Activated CD4-positive, alpha-beta T cell treated with anti-CD3 and anti-CD28 coated beads for 36 hours (primary cell): ENCODE measurements at regions of chr9 and their contacts with region 1.

Region 1: DNA sequence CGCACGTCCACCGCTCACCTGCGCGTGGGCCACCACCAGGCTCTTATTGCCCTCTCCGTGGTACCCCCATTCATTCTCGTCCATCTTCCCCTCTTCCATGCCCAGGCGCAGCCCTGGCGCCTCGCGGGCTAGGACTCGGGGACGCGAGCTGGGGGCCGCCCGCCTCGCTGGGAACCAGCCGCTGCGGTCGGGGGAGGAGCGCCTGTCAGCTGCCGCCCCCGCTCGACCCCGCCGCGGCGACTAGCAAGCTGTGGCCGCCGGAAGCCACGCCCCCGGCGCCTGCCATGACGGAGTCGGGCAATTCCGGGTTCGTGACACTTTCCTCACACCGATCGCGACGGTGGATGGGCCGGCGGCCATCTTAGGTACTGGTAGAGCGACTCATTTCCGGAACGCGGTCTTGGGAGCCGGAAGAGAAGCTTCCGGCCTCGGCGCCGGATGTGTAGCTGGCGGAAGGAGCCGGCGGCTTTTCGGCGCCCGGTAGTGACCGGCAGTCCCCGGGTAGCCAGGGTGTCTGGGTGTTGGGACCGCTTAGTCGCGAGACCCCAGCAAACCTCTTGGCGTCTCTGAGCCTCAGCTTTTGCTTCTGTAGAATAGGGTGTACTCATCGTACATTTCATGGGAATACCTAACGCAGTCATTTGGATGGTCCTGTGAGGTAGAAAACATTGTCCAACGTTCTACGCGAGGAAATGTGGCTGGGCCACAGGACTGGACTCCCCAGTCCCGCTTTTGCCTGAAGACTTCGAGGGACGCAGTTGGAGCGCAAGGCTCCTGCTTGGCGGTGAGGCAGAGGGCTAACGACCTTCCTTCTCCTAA is at the start of gene IPPK:
- DNase-seq: peak; percentile 99
- ATAC-seq: peak; percentile 94
- H3K4me3 Mint-ChIP-seq: peak within 1 kb of the TSS; percentile 96
- H3K27ac Mint-ChIP-seq: peak within 1 kb of the TSS; percentile 93
- H3K4me1 Mint-ChIP-seq: peaks cover 33% of the 10 kb centered on the region
- H3K27me3 Mint-ChIP-seq: no peaks in the 10 kb centered on the region
- total RNA-seq, gene IPPK: 9.9 to 12.2 TPM

Region 2: DNA sequence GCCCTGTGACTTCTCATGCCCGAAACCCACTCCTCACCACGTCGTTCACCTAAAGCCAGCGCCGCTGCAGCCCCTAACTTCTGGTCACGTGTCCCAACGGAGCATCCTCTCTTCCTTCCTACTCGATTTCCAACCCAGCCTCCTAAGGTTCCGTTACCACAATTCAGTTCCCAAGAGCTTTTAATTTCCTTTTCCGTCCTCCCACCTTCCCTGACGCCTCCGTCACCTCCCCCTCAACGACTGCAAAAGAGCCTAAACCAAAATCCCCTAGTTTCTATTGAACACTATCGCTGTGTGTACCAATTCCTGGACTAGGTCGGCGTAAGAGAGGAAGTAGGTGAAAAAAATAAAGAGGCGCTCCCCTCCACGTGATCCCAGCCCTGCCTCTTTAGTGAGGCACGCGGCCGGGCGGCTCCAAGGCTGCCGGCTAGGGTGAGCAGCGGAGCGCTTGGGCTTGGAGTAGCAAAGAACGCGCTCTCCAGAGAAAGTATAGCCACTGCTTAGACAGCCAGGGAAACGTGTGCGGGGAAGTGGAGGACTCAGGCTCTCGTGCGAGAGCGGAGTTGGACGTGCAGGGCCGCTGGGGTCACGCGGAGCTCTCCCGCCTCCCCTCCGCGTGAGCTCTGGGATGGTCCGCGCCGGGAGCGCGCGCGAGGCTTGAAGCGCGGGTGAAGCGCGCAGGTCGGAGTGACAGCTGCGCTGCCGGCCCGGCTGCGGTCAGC is 344.7 kb before region 1 on chr9 and contains the starts of genes CENPP and NOL8:
- CTCF ChIA-PET with region 1: no interaction called
- POLR2A ChIA-PET with region 1: interaction called, 8 read pairs
- intact Hi-C with region 1: loop called in 1 of 2 experiments (anchors 1 kb)
- DNase-seq: peak; percentile 90
- ATAC-seq: peak; percentile 95
- H3K4me3 Mint-ChIP-seq: peak within 1 kb of the TSS; percentile 89
- H3K27ac Mint-ChIP-seq: peak within 1 kb of the TSS; percentile 97
- H3K4me1 Mint-ChIP-seq: peaks cover 37% of the 10 kb centered on the region
- H3K27me3 Mint-ChIP-seq: no peaks in the 10 kb centered on the region
- total RNA-seq, gene CENPP: 22.8 to 32.3 TPM
- total RNA-seq, gene NOL8: 57.7 to 80.2 TPM

Region 3: GRCh38 chr9:92444841-92445240 is 225.3 kb before region 1 on chr9:
- CTCF ChIA-PET with region 1: no interaction called
- POLR2A ChIA-PET with region 1: no interaction called
- intact Hi-C with region 1: no loop called
- DNase-seq: no peak
- ATAC-seq: no peak
- H3K4me3 Mint-ChIP-seq: no peak overlapping the region
- H3K27ac Mint-ChIP-seq: no peak overlapping the region
- H3K4me1 Mint-ChIP-seq: peaks cover 3% of the 10 kb centered on the region
- H3K27me3 Mint-ChIP-seq: no peaks in the 10 kb centered on the region

Region 4: GRCh38 chr9:92706216-92706940 is 36.3 kb after region 1 on chr9:
- CTCF ChIA-PET with region 1: no interaction called
- POLR2A ChIA-PET with region 1: no interaction called
- intact Hi-C with region 1: loop called in 1 of 2 experiments (anchors 2 kb)
- DNase-seq: peak; percentile 72
- ATAC-seq: peak; percentile 93
- H3K4me3 Mint-ChIP-seq: no peak overlapping the region
- H3K27ac Mint-ChIP-seq: peak overlapping the region; percentile 1
- H3K4me1 Mint-ChIP-seq: peaks cover 21% of the 10 kb centered on the region
- H3K27me3 Mint-ChIP-seq: no peaks in the 10 kb centered on the region

Region 5: DNA sequence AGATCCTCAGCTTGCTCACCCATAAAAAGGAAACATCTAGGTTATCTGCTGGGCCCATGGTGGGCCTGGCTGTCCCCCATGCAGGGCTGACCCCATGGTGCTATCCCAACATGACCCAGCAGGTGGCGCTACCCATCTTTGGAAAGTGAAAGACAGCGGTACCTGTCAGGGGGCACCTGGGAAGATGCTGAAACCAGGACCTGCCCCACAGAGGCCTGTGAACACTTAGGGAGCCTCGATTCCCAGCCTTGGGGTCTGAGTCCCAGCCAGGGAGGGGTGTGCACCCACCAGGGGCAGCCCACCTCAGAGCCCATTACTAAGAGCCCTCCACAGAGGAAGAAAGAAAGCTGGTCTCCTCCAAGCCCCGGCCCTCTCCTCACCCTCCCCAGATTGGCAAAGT is 46.5 kb after region 1 on chr9:
- CTCF ChIA-PET with region 1: interaction called, 15 read pairs
- POLR2A ChIA-PET with region 1: no interaction called
- intact Hi-C with region 1: no loop called
- DNase-seq: peak; percentile 88
- ATAC-seq: peak; percentile 71
- H3K4me3 Mint-ChIP-seq: no peak overlapping the region
- H3K27ac Mint-ChIP-seq: peak overlapping the region; percentile 42
- H3K4me1 Mint-ChIP-seq: peaks cover 19% of the 10 kb centered on the region
- H3K27me3 Mint-ChIP-seq: no peaks in the 10 kb centered on the region

Region 6: GRCh38 chr9:92877531-92878430 is 207.7 kb after region 1 on chr9 and contains the start of gene ZNF484:
- CTCF ChIA-PET with region 1: no interaction called
- POLR2A ChIA-PET with region 1: no interaction called
- intact Hi-C with region 1: loop called in 1 of 2 experiments (anchors 1 kb)
- DNase-seq: peak; percentile 98
- ATAC-seq: peak; percentile 97
- H3K4me3 Mint-ChIP-seq: peak within 1 kb of the TSS; percentile 99
- H3K27ac Mint-ChIP-seq: peak within 1 kb of the TSS; percentile 97
- H3K4me1 Mint-ChIP-seq: peaks cover 46% of the 10 kb centered on the region
- H3K27me3 Mint-ChIP-seq: no peaks in the 10 kb centered on the region
- total RNA-seq, gene ZNF484: 7.2 to 9.8 TPM

Region 7: DNA sequence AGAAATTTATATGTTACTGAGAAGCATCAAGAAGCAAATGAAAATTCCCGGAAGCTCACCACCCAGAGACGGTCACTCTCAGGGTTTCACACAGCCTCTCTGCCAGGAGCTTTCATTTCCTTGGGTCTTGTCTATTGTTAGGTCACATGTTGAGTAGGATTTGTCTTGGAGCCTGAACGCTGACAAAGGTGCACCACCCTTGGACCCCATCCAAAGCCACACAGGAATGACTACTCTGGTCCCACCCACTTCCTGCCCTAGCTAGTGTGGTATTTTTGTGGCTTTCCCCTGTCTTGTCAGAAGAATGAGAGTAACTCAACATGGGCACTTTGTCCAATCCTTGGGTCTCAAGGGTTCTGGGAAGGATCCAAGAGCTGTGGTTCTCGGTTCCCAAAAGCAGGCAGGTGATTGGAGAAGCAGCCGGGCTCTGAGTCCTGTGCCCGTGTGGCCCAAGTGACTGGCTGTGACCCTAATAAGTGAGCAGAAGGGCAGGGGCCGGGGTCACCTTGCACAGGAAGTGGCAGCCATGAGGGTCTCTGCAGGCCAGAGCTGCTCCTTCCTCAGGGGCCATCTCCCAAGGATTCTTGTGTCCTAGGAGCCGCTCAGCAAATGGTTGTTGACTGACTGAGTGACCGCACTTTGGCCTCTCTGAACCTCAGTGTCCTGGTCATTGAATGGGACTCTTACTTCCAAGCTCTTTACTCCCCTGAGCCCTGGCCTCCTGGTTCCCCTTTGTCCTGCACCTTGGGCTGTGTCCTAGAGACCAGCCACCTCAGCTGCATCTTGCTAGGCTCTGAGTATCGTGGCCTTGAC is 284.2 kb after region 1 on chr9:
- CTCF ChIA-PET with region 1: no interaction called
- POLR2A ChIA-PET with region 1: no interaction called
- intact Hi-C with region 1: loop called in 1 of 2 experiments (anchors 5 kb)
- DNase-seq: peak; percentile 89
- ATAC-seq: peak; percentile 85
- H3K4me3 Mint-ChIP-seq: peak overlapping the region; percentile 66
- H3K27ac Mint-ChIP-seq: peak overlapping the region; percentile 97
- H3K4me1 Mint-ChIP-seq: peaks cover 78% of the 10 kb centered on the region
- H3K27me3 Mint-ChIP-seq: no peaks in the 10 kb centered on the region